Naive thymus-derived CD4-positive, alpha-beta T cell (primary cell): ENCODE measurements at regions of chr17 and their contacts with region 1.

Region 1: DNA sequence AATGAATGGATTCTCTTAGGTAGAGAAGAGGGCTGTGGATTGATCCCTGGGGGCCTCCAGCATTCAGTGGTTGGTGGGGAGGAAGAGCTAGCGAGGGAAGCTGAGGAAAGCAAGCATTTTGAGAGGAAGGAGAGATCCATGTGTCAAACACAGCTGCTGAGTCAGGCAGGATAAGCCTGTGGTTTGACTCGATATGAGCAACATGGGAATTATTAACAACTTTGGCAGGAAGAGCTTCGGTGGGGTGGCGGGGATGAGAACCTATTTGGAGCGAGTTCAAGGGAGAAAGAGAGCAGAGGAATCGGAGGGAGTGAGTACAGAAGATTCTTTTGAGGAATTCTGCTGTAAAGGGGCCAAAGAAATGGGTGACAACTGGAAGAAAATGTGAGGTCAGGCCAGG is 59.5 kb upstream of the CDC42EP4 start:
- DNase-seq: no peak
- ATAC-seq: no peak
- H3K4me3 ChIP-seq: no peak overlapping the region
- H3K4me3 Mint-ChIP-seq: no peak overlapping the region
- H3K27ac ChIP-seq: no peak overlapping the region
- H3K27ac Mint-ChIP-seq: no peak overlapping the region
- H3K4me1 ChIP-seq: no peaks in the 10 kb centered on the region
- H3K4me1 Mint-ChIP-seq: peaks cover 0 to 3% (median 0%) of the 10 kb centered on the region in 7 donors
- H3K27me3 ChIP-seq: no peaks in the 10 kb centered on the region
- H3K27me3 Mint-ChIP-seq: peaks cover 0 to 6% (median 0%) of the 10 kb centered on the region in 5 donors

Region 2: DNA sequence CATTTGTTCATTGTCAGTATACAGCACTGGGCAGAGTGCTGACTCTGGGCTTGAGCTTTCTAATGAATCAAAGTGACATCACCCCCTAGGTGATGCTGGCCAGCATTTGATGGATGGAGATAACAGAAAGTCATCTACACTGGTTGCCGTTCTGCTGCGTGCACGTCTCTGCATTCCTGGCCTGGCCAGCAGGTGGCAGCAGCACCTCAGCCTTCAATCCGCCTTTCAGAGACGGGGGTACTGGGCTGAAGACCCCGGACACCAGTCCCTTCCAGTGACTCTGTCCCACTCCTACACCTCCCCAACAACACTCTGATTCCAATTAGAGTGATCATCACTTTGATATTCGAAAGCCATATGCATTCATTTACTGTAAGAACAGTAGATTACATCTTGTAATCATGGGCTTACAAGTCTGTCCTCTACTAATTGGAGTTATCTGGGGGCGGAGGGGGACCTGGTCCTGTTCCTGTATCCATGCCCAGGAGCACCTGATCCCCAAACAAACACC is 115.6 kb before region 1 on chr17:
- CTCF ChIA-PET with region 1: interaction called, 43 read pairs
- POLR2A ChIA-PET with region 1: interaction called, 3 read pairs
- intact Hi-C with region 1: loop called in 1 of 2 experiments (anchors 1 kb)
- DNase-seq: peak in 7 of 9 donors; percentile 38 to 63 (median 48)
- ATAC-seq: peak; percentile 75
- H3K4me3 ChIP-seq: no peak overlapping the region
- H3K4me3 Mint-ChIP-seq: no peak overlapping the region
- H3K27ac ChIP-seq: no peak overlapping the region
- H3K27ac Mint-ChIP-seq: no peak overlapping the region
- H3K4me1 ChIP-seq: no peaks in the 10 kb centered on the region
- H3K4me1 Mint-ChIP-seq: peaks cover 0 to 4% (median 0%) of the 10 kb centered on the region in 7 donors
- H3K27me3 ChIP-seq: no peaks in the 10 kb centered on the region
- H3K27me3 Mint-ChIP-seq: no peaks in the 10 kb centered on the region